Activated naive CD8-positive, alpha-beta T cell treated with anti-CD3 and anti-CD28 coated beads, Interleukin-2, amount 10 ng/mL, durations not matched to agents 7 days and 5 days (primary cell): ENCODE measurements at regions of chr7 and their contacts with region 1.

Region 1: GRCh38 chr7:3065724-3066143 is 22.1 kb upstream of the CARD11 start:
- DNase-seq: peak; percentile 81
- ATAC-seq: peak; percentile 28
- H3K4me3 Mint-ChIP-seq: peak overlapping the region; percentile 70
- H3K27ac Mint-ChIP-seq: peak overlapping the region; percentile 86
- H3K4me1 Mint-ChIP-seq: peaks cover 71% of the 10 kb centered on the region
- H3K27me3 Mint-ChIP-seq: no peaks in the 10 kb centered on the region

Region 2: DNA sequence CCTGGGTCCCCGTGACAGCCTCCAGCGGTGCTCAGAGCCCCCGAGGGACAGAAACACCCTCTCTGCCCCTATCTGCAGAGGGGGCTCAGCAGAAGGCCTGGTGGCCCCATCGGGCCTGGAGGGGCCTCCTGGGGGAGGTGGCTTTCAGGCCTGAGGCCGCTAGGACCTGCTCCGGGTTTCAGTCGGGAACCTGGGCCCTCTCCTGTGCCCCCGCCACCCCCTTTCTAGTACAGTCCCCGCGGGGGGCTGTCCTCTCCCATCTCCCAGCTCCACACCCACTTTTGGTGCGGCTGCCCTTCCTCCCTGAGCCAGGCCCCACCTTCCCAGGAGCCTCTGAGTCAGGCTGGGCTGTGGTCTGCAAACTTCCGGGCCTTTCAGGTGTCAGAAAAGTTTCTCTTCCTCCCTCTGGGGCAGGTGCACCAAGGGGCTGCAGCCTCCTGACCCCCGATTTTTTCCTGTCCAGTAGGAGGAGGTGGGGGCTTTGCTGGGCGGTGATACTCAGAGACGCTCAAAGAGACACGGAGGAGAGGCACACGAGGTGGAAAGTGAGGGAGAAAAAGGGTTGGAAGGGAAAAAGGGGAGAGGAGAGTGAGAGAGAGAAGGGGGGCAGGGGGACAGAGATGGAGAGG is 22.8 kb before region 1 on chr7:
- POLR2A ChIA-PET with region 1: interaction called, 32 read pairs
- DNase-seq: peak; percentile 76
- ATAC-seq: peak; percentile 82
- H3K4me3 Mint-ChIP-seq: peak overlapping the region; percentile 100
- H3K27ac Mint-ChIP-seq: peak overlapping the region; percentile 98
- H3K4me1 Mint-ChIP-seq: peaks cover 45% of the 10 kb centered on the region
- H3K27me3 Mint-ChIP-seq: no peaks in the 10 kb centered on the region